ENCODE measurements at regions of chr19 and their contacts with region 1.

Region 1: GRCh38 chr19:52734893-52735661 is at the start of gene ZNF611:
- DNase-seq: peak; percentile 99
- ATAC-seq: peak; percentile 97
- H3K4me3 Mint-ChIP-seq: peak within 1 kb of the TSS; percentile 92
- H3K27ac Mint-ChIP-seq: peak within 1 kb of the TSS; percentile 88
- H3K4me1 Mint-ChIP-seq: peaks cover 21% of the 10 kb centered on the region
- H3K27me3 Mint-ChIP-seq: no peaks in the 10 kb centered on the region
- CTCF ChIP-seq: no peak
- total RNA-seq, gene ZNF611: 33.5 and 41.9 TPM in 2 replicates

Region 2: DNA sequence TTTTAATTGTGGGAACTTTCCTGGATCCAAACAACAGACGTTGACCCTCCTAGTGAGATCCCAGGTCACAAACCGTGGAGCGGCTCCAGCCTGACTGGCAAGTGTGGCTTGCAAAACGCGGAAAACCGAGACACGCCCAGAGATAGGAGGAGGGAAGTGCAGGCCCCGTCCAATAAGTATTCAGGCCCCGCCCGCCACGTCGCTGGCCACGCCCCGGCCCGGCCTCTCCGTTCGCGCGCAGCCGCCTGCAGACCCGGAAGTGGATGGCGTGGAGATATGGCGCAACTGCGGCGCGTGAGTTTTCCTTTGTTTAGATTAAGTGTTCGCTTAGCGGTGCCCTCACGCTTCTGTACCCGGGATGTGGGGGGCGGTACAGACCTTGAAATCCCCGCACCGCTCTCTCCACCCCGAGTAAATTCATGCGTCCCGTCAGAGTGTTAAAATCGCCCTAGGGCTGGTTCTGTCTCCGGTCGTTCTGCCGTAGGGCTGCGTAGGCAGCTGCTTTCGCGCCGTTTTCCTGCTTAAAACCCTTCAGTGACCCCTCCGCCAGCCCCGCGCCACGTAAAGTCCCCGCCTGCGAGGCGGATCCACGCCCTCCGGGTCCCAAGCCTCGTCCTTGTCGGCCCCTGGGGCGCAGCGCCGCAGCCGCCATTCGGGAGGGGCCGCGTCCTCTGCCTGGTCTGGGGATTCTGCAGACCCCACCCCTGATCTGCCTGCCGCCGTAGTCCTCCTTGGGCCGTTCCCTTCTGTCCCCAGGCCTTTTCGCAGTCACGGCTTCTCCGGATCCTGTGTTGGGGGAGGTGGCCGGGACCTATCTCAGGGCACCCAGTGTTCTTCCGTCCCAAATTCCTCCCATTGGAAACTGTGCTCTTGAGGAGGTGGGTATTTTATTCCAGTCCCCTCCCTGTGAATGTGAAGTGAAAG is 465.5 kb before region 1 on chr19 and contains the start of gene ZNF766:
- CTCF ChIA-PET with region 1: no interaction called
- POLR2A ChIA-PET with region 1: no interaction called
- intact Hi-C with region 1: loop called (anchors 5 kb)
- DNase-seq: peak; percentile 98
- ATAC-seq: peak; percentile 97
- H3K4me3 Mint-ChIP-seq: peak within 1 kb of the TSS; percentile 98
- H3K27ac Mint-ChIP-seq: peak within 1 kb of the TSS; percentile 94
- H3K4me1 Mint-ChIP-seq: peaks cover 45% of the 10 kb centered on the region
- H3K27me3 Mint-ChIP-seq: no peaks in the 10 kb centered on the region
- CTCF ChIP-seq: no peak
- total RNA-seq, gene ZNF766: 33.0 and 35.0 TPM in 2 replicates

Region 3: GRCh38 chr19:52527134-52527955 is 207.7 kb before region 1 on chr19 and contains the start of gene ZNF808:
- CTCF ChIA-PET with region 1: no interaction called
- POLR2A ChIA-PET with region 1: no interaction called
- intact Hi-C with region 1: loop called (anchors 2 kb)
- DNase-seq: peak; percentile 79
- ATAC-seq: peak; percentile 89
- H3K4me3 Mint-ChIP-seq: peak within 1 kb of the TSS; percentile 98
- H3K27ac Mint-ChIP-seq: peak within 1 kb of the TSS; percentile 98
- H3K4me1 Mint-ChIP-seq: peaks cover 25% of the 10 kb centered on the region
- H3K27me3 Mint-ChIP-seq: no peaks in the 10 kb centered on the region
- CTCF ChIP-seq: no peak
- total RNA-seq, gene ZNF808: 31.1 and 33.7 TPM in 2 replicates

Region 4: DNA sequence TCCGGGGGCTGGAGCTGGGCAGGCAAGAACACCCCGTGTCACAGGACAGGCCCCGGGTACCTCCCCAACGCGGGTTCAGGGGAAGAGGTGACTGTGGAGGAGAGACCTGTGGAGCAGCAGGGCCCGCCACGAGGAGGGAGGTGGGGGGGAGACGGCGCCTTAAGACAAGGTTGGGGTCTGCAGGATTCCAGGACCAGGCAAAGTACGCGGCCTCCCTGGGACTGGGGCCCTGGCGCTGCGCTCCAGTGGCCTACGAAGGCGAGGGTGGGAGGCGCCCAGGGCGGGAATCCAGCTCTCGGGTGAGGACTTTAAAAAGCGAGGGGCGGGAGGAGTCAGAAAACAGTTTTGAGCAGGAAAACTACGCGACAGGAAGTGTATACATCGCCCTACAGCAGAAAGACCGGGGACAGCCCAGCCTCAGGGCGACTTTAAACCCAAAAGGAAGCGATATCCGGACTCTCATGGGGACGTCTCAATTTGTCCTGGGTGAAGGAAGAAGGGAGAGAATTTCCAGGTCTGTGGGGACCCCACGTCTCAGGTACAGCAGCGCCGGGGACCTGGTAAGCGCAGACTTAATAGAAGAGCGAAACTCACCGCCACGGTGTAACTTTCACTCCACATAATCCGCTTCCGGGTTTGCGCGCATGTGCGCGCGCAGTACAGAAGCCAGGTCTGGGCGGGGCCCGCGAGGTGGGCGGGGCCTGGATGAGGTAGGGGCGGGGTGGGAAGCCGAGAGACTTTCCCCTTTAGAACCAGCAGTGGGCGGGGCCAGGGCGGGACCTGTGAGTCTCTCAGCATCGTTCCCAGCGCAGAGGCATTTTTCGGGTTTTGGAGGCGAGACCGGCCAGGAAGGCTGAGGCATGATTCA is 97.1 kb before region 1 on chr19 and contains the start of gene ZNF83:
- CTCF ChIA-PET with region 1: no interaction called
- POLR2A ChIA-PET with region 1: no interaction called
- intact Hi-C with region 1: loop called (anchors 1 kb)
- DNase-seq: peak; percentile 89
- ATAC-seq: peak; percentile 94
- H3K4me3 Mint-ChIP-seq: peak within 1 kb of the TSS; percentile 95
- H3K27ac Mint-ChIP-seq: peak within 1 kb of the TSS; percentile 98
- H3K4me1 Mint-ChIP-seq: peaks cover 15% of the 10 kb centered on the region
- H3K27me3 Mint-ChIP-seq: no peaks in the 10 kb centered on the region
- CTCF ChIP-seq: no peak
- total RNA-seq, gene ZNF83: 42.3 and 49.4 TPM in 2 replicates

Region 5: DNA sequence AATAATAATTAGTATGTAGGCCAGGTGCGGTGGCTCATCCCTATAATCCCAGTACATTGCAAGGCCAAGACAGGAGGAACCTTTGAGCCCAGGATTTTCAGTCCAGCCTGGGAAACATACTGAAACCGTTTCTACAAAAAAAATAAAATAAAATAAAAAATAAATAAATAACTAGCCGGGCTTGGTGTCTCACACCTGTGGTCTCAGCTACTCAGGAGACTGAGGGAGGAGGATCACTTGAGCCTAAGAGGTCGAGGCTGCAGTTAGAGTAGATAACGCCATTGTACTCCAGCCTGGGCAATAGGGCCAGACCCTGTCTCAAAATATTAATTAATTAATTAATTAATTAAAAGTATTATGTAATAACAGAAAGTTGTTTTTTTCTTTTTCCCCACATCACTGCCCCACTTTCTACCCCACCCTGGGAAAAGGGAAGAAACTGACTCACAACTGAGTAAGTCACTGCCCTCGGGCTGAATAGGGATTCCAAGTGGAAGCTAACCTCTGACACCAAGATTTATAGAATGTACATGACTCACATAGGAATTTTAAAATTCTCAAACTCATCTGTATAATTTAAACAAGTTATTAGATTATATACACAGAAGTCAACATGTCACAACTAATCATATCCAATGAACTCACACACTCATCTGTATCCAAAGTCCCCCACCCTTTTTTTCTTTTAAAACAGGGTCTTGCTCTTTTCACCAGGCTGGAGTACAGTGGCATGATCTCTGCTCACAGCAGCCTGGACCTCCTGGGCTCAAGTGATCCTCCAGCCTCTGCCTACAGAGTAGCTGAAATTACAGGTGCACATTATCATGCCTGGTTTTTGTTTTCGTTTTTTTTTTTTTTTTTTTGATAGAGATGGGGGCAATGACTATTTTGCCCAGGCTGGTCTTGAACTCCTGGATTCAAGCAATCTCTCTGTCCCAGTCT is 12.7 kb before region 1 on chr19:
- CTCF ChIA-PET with region 1: no interaction called
- POLR2A ChIA-PET with region 1: interaction called, 14 read pairs
- intact Hi-C with region 1: no loop called
- DNase-seq: no peak
- ATAC-seq: no peak
- H3K4me3 Mint-ChIP-seq: no peak overlapping the region
- H3K27ac Mint-ChIP-seq: no peak overlapping the region
- H3K4me1 Mint-ChIP-seq: peaks cover 2% of the 10 kb centered on the region
- H3K27me3 Mint-ChIP-seq: no peaks in the 10 kb centered on the region
- CTCF ChIP-seq: no peak

Region 6: DNA sequence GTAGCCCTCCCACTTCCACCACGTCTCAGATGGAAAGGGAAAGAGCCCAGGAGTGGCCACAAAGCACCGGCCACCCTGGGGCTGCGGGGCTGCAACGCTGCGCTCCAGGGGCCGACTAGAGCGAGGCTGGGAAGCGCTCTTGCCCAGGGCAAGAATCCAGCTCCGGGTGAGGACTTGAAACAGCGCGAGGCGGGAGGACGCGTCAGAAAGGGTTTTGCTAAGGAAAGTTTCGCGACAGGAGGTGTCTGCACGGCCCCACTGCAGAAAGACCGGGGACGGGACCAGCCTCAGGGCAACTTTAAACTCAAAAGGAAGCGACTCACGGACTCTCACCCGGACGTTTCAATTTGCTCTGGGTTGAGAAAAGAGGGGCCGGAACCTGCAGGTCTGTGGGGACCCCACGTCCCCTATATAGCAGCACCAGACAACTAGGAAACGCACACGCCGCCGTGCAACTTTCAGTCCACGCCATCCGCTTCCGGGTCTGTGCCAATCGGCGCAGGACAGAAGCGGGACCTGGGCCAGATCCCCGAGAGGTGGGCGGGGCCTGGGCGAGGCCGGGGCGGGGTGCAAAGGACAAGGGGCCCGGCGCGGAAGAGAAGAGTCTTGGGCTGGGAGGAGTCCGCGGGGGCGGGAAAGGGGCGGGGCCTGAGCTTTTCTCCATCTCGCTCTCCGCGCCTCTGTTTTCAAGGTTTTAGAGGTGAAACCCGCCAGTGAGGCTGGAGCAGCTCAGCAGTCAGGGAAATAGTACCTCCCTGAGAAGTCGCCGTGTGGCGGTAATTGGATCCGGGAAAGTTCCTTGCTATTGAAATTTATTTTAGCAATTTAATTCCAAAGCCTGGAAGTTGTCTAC is 227.5 kb after region 1 on chr19 and contains the start of gene ZNF816:
- CTCF ChIA-PET with region 1: no interaction called
- POLR2A ChIA-PET with region 1: interaction called, 8 read pairs
- intact Hi-C with region 1: loop called (anchors 2 kb)
- DNase-seq: peak; percentile 97
- ATAC-seq: peak; percentile 99
- H3K4me3 Mint-ChIP-seq: peak within 1 kb of the TSS; percentile 94
- H3K27ac Mint-ChIP-seq: peak within 1 kb of the TSS; percentile 92
- H3K4me1 Mint-ChIP-seq: peaks cover 31% of the 10 kb centered on the region
- H3K27me3 Mint-ChIP-seq: no peaks in the 10 kb centered on the region
- CTCF ChIP-seq: no peak
- total RNA-seq, gene ZNF816: 17.0 and 18.0 TPM in 2 replicates

Measured in activated B cell treated with CpG ODN at 0.5 μM for 24 hours (primary cell).